ENCODE measurements at regions of chr11 and their contacts with region 1.

Region 1: GRCh38 chr11:1050581-1051355 is 14.2 kb upstream of the MUC6 start:
- DNase-seq: peak; percentile 87
- ATAC-seq: peak; percentile 57
- H3K4me3 ChIP-seq: no peak overlapping the region
- H3K27ac ChIP-seq: peak overlapping the region; percentile 99
- H3K4me1 ChIP-seq: peaks cover 40% of the 10 kb centered on the region
- H3K27me3 ChIP-seq: no peaks in the 10 kb centered on the region
- CTCF ChIP-seq: peak; percentile 88

Region 2: GRCh38 chr11:606257-606656 is 444.5 kb before region 1 on chr11:
- CTCF ChIA-PET with region 1: no interaction called
- POLR2A ChIA-PET with region 1: no interaction called
- intact Hi-C with region 1: no loop called
- DNase-seq: peak; percentile 23
- ATAC-seq: peak; percentile 60
- H3K4me3 ChIP-seq: no peak overlapping the region
- H3K27ac ChIP-seq: no peak overlapping the region
- H3K4me1 ChIP-seq: no peaks in the 10 kb centered on the region
- H3K27me3 ChIP-seq: no peaks in the 10 kb centered on the region
- CTCF ChIP-seq: no peak

Region 3: GRCh38 chr11:842370-843002 is 208.3 kb before region 1 on chr11 and contains the starts of genes POLR2L and TSPAN4:
- CTCF ChIA-PET with region 1: no interaction called
- POLR2A ChIA-PET with region 1: no interaction called
- intact Hi-C with region 1: loop called (anchors 5 kb)
- DNase-seq: peak; percentile 86
- ATAC-seq: peak; percentile 3
- H3K4me3 ChIP-seq: peak within 1 kb of the TSS; percentile 100
- H3K27ac ChIP-seq: peak within 1 kb of the TSS; percentile 87
- H3K4me1 ChIP-seq: peaks cover 46% of the 10 kb centered on the region
- H3K27me3 ChIP-seq: no peaks in the 10 kb centered on the region
- CTCF ChIP-seq: no peak
- total RNA-seq, gene POLR2L: 661 and 1,148 TPM in 2 replicates
- total RNA-seq, gene TSPAN4: 121 and 138 TPM in 2 replicates

Region 4: GRCh38 chr11:859509-860131 is 191.1 kb before region 1 on chr11:
- CTCF ChIA-PET with region 1: no interaction called
- POLR2A ChIA-PET with region 1: interaction called, 12 read pairs
- intact Hi-C with region 1: no loop called
- DNase-seq: peak; percentile 26
- ATAC-seq: peak; percentile 21
- H3K4me3 ChIP-seq: no peak overlapping the region
- H3K27ac ChIP-seq: no peak overlapping the region
- H3K4me1 ChIP-seq: no peaks in the 10 kb centered on the region
- H3K27me3 ChIP-seq: no peaks in the 10 kb centered on the region
- CTCF ChIP-seq: no peak

Region 5: GRCh38 chr11:1067812-1068496 is 17.2 kb after region 1 on chr11:
- CTCF ChIA-PET with region 1: interaction called, 3 read pairs
- POLR2A ChIA-PET with region 1: interaction called, 38 read pairs
- intact Hi-C with region 1: loop called (anchors 1 kb)
- DNase-seq: no peak
- ATAC-seq: no peak
- H3K4me3 ChIP-seq: no peak overlapping the region
- H3K27ac ChIP-seq: peak overlapping the region; percentile 41
- H3K4me1 ChIP-seq: peaks cover 14% of the 10 kb centered on the region
- H3K27me3 ChIP-seq: no peaks in the 10 kb centered on the region
- CTCF ChIP-seq: no peak

Region 6: DNA sequence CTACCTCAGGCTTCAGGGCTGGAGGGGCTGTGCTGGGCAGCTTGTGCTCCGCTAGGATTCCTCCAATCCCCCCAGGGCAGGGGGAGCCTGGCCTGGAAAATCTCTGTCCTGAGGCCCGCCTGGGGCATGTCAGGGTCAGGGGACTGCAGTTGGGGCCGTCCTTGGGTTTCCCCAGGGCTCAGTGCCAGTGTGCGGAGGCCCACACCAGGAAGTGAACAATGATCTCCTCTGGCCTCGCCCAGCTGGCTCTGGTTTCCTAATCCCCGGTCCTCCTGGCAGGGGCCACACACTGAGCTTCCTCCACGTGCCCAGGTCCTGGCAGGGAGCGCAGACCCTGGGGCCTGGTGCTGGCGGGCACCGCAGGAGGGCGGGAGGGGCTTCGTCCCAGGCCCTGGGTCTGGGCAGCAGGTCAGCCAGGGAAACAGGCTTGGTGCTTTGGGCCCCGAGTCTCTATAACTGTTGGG is 22.5 kb after region 1 on chr11:
- CTCF ChIA-PET with region 1: interaction called, 3 read pairs
- POLR2A ChIA-PET with region 1: interaction called, 38 read pairs
- intact Hi-C with region 1: loop called (anchors 1 kb)
- DNase-seq: peak; percentile 76
- ATAC-seq: peak; percentile 61
- H3K4me3 ChIP-seq: no peak overlapping the region
- H3K27ac ChIP-seq: peak overlapping the region; percentile 99
- H3K4me1 ChIP-seq: peaks cover 28% of the 10 kb centered on the region
- H3K27me3 ChIP-seq: no peaks in the 10 kb centered on the region
- CTCF ChIP-seq: no peak

Region 7: GRCh38 chr11:1163911-1164735 is 113.4 kb after region 1 on chr11:
- CTCF ChIA-PET with region 1: no interaction called
- POLR2A ChIA-PET with region 1: no interaction called
- intact Hi-C with region 1: no loop called
- DNase-seq: no peak
- ATAC-seq: no peak
- H3K4me3 ChIP-seq: no peak overlapping the region
- H3K27ac ChIP-seq: no peak overlapping the region
- H3K4me1 ChIP-seq: no peaks in the 10 kb centered on the region
- H3K27me3 ChIP-seq: no peaks in the 10 kb centered on the region
- CTCF ChIP-seq: no peak

Measured in PC-3 (cell line).